Gastrocnemius medialis (tissue), 4 donors: ENCODE measurements at regions of chr2 and their contacts with region 1.

Region 1: DNA sequence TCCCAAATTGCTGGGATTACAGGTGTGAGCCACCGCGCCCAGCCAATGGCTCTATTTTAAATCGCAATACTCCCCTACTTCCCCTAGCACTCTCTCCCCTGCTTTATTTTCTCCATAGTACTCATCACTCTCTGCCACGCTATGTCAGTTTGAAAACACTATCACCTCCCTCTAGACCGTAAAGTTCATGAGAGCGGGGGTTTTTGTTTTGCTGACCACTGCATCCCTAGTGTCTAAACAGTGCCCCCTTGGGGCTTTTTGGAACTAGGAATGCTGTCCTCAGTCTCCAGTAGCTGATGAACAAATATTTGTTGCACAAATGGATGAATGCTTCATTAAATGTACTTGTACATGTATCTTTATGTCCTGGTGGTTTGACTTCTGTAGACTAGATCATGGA is 44.1 kb downstream of the ATOH8 start:
- DNase-seq: no peak
- ATAC-seq: peak in 1 of 2 donors; percentile 53
- H3K4me3 ChIP-seq: no peak overlapping the region
- H3K27ac ChIP-seq: peak overlapping the region in 2 of 4 donors; percentile 53 to 59
- H3K4me1 ChIP-seq: peaks cover 60 to 63% of the 10 kb centered on the region in 2 donors
- H3K27me3 ChIP-seq: no peaks in the 10 kb centered on the region
- CTCF ChIP-seq: peak in 4 of 5 experiments; percentile 29 to 68 (median 40)
- POLR2A ChIP-seq: no peak

Region 2: GRCh38 chr2:85780316-85781012 is 17.5 kb before region 1 on chr2:
- in situ Hi-C with region 1: no loop called
- intact Hi-C with region 1: loop called (anchors 2 kb)
- DNase-seq: peak in 1 of 2 donors; percentile 90
- ATAC-seq: peak; percentile 31 to 75
- H3K4me3 ChIP-seq: no peak overlapping the region
- H3K27ac ChIP-seq: peak overlapping the region; percentile 51 to 96 (median 74)
- H3K4me1 ChIP-seq: peaks cover 75 to 79% of the 10 kb centered on the region in 2 donors
- H3K27me3 ChIP-seq: no peaks in the 10 kb centered on the region
- CTCF ChIP-seq: no peak
- POLR2A ChIP-seq: no peak

Region 3: GRCh38 chr2:86185517-86186212 is 387.7 kb after region 1 on chr2:
- in situ Hi-C with region 1: no loop called
- intact Hi-C with region 1: no loop called
- DNase-seq: no peak
- ATAC-seq: no peak
- H3K4me3 ChIP-seq: no peak overlapping the region
- H3K27ac ChIP-seq: peak overlapping the region; percentile 72 to 80 (median 74)
- H3K4me1 ChIP-seq: peaks cover 56 to 69% of the 10 kb centered on the region in 2 donors
- H3K27me3 ChIP-seq: no peaks in the 10 kb centered on the region
- CTCF ChIP-seq: no peak
- POLR2A ChIP-seq: no peak